ENCODE measurements at regions of chr2 and their contacts with region 1.

Region 1: GRCh38 chr2:204024503-204024902 is 87.9 kb downstream of the ICOS start:
- DNase-seq: no peak
- H3K4me3 Mint-ChIP-seq: no peak overlapping the region
- H3K27ac Mint-ChIP-seq: peak overlapping the region; percentile 32
- H3K4me1 Mint-ChIP-seq: peaks cover 75% of the 10 kb centered on the region
- H3K27me3 Mint-ChIP-seq: no peaks in the 10 kb centered on the region

Region 2: GRCh38 chr2:203730076-203730729 is 294.3 kb before region 1 on chr2:
- intact Hi-C with region 1: loop called (anchors 5 kb)
- DNase-seq: no peak
- H3K4me3 Mint-ChIP-seq: peak overlapping the region; percentile 32
- H3K27ac Mint-ChIP-seq: peak overlapping the region; percentile 97
- H3K4me1 Mint-ChIP-seq: peaks cover 92% of the 10 kb centered on the region
- H3K27me3 Mint-ChIP-seq: no peaks in the 10 kb centered on the region

Region 3: GRCh38 chr2:203871371-203871983 is 153.0 kb before region 1 on chr2:
- intact Hi-C with region 1: loop called (anchors 1 kb)
- DNase-seq: peak; percentile 67
- H3K4me3 Mint-ChIP-seq: peak overlapping the region; percentile 95
- H3K27ac Mint-ChIP-seq: peak overlapping the region; percentile 99
- H3K4me1 Mint-ChIP-seq: peaks cover 82% of the 10 kb centered on the region
- H3K27me3 Mint-ChIP-seq: no peaks in the 10 kb centered on the region

Region 4: GRCh38 chr2:203972066-203972465 is 52.4 kb before region 1 on chr2:
- intact Hi-C with region 1: loop called (anchors 1 kb)
- DNase-seq: no peak
- H3K4me3 Mint-ChIP-seq: no peak overlapping the region
- H3K27ac Mint-ChIP-seq: no peak overlapping the region
- H3K4me1 Mint-ChIP-seq: peaks cover 14% of the 10 kb centered on the region
- H3K27me3 Mint-ChIP-seq: no peaks in the 10 kb centered on the region

Region 5: GRCh38 chr2:204005940-204006721 is 18.4 kb before region 1 on chr2:
- intact Hi-C with region 1: loop called (anchors 1 kb)
- DNase-seq: no peak
- H3K4me3 Mint-ChIP-seq: no peak overlapping the region
- H3K27ac Mint-ChIP-seq: peak overlapping the region; percentile 85
- H3K4me1 Mint-ChIP-seq: peaks cover 91% of the 10 kb centered on the region
- H3K27me3 Mint-ChIP-seq: no peaks in the 10 kb centered on the region

Region 6: DNA sequence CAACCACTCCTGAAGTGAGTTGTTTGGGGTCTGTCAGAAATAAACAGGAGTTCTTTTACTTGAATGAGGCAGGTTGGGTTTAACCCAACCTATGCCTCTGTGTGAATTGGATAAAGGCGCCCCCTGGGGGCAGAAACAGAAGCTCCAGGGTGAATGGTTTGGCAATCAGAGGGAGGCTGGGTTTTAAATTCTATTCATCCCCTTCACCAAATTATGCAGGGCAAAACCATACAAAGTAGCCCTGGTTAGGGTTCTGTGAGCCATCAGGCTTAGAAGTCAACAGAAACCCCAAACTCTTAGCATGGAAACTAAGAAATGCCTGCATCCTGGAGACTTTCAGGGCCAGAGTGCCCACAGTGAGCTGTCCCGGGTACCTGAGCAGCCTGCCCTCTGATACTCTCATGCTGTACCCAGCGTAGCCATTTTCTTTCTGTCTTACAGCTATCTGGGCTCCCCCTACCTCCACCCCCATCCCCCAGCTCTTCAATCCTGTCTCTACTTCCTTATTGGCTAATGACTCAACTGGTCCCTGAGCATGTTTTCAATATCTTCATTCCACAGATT is 153.6 kb after region 1 on chr2:
- intact Hi-C with region 1: loop called (anchors 1 kb)
- DNase-seq: peak; percentile 51
- H3K4me3 Mint-ChIP-seq: no peak overlapping the region
- H3K27ac Mint-ChIP-seq: no peak overlapping the region
- H3K4me1 Mint-ChIP-seq: no peaks in the 10 kb centered on the region
- H3K27me3 Mint-ChIP-seq: peaks cover 17% of the 10 kb centered on the region

Region 7: GRCh38 chr2:205680067-205680466 is 1655.6 kb after region 1 on chr2:
- intact Hi-C with region 1: loop called (anchors 5 kb)
- DNase-seq: peak; percentile 44
- H3K4me3 Mint-ChIP-seq: peak overlapping the region; percentile 43
- H3K27ac Mint-ChIP-seq: peak overlapping the region; percentile 22
- H3K4me1 Mint-ChIP-seq: peaks cover 45% of the 10 kb centered on the region
- H3K27me3 Mint-ChIP-seq: peaks cover 39% of the 10 kb centered on the region